HepG2 (cell line): ENCODE measurements at regions of chr7 and their contacts with region 1.

Region 1: GRCh38 chr7:132249614-132249972 is 326.7 kb downstream of the PLXNA4 start:
- DNase-seq: peak; percentile 64
- ATAC-seq: peak; percentile 73
- H3K4me3 ChIP-seq: no peak overlapping the region; a peak in 1 of 6 replicates
- H3K27ac ChIP-seq: no peak overlapping the region
- H3K4me1 ChIP-seq: peaks cover 44% of the 10 kb centered on the region
- H3K27me3 ChIP-seq: no peaks in the 10 kb centered on the region; a peak in 1 of 5 replicates
- CTCF ChIP-seq: peak; percentile 61
- EP300 ChIP-seq: no peak
- POLR2A ChIP-seq: no peak
- RAD21 ChIP-seq: no peak

Region 2: GRCh38 chr7:131688738-131689661 is 560.6 kb before region 1 on chr7:
- CTCF ChIA-PET with region 1: no interaction called
- POLR2A ChIA-PET with region 1: no interaction called
- in situ Hi-C with region 1: loop called (anchors 25 kb)
- intact Hi-C with region 1: no loop called
- DNase-seq: peak; percentile 49
- ATAC-seq: peak; percentile 84
- H3K4me3 ChIP-seq: no peak overlapping the region
- H3K27ac ChIP-seq: no peak overlapping the region
- H3K4me1 ChIP-seq: no peaks in the 10 kb centered on the region
- H3K27me3 ChIP-seq: peaks cover 2 to 38% of the 10 kb centered on the region in 2 experiments; a peak in 3 of 5 replicates
- CTCF ChIP-seq: peak; percentile 92
- EP300 ChIP-seq: no peak
- POLR2A ChIP-seq: no peak
- RAD21 ChIP-seq: peak; percentile 73

Region 3: GRCh38 chr7:131945313-131945911 is 304.2 kb before region 1 on chr7:
- CTCF ChIA-PET with region 1: interaction called, 13 read pairs
- POLR2A ChIA-PET with region 1: no interaction called
- in situ Hi-C with region 1: loop called (anchors 5 kb)
- intact Hi-C with region 1: loop called (anchors 1 kb)
- DNase-seq: peak; percentile 9
- ATAC-seq: peak; percentile 92
- H3K4me3 ChIP-seq: 0 out of 6 replicates have a peak overlapping the region, but pooled peaks of 1 of the 3 experiments have one; percentile 10
- H3K27ac ChIP-seq: no peak overlapping the region
- H3K4me1 ChIP-seq: peaks cover 31% of the 10 kb centered on the region
- H3K27me3 ChIP-seq: peaks cover 4 to 41% of the 10 kb centered on the region in 2 experiments; a peak in 4 of 5 replicates
- CTCF ChIP-seq: peak; percentile 91
- EP300 ChIP-seq: no peak
- POLR2A ChIP-seq: no peak
- RAD21 ChIP-seq: peak; percentile 93

Region 4: DNA sequence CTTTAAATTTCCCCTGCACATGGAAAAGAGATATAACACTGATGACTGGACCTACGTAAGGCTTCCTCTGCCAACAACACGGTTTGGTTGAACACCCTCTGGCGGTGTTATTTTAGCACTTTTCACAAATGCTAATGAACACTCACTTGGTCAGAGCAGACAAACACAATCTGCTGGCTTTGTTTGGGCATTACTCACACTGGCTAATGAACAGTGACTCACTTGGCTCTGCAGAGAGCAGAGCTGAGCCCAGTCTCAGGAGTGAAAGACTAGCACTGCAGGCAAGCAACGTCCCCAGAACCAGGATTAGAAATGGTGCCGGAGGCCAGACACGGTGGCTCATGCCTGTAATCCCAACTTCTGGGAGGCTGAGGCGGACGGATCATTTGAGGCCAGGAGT is 104.1 kb before region 1 on chr7:
- CTCF ChIA-PET with region 1: no interaction called
- POLR2A ChIA-PET with region 1: no interaction called
- in situ Hi-C with region 1: no loop called
- intact Hi-C with region 1: loop called (anchors 5 kb)
- DNase-seq: no peak
- ATAC-seq: no peak
- H3K4me3 ChIP-seq: no peak overlapping the region
- H3K27ac ChIP-seq: no peak overlapping the region
- H3K4me1 ChIP-seq: no peaks in the 10 kb centered on the region
- H3K27me3 ChIP-seq: peaks cover 2 to 45% of the 10 kb centered on the region in 2 experiments; a peak in 3 of 5 replicates
- CTCF ChIP-seq: no peak
- EP300 ChIP-seq: no peak
- POLR2A ChIP-seq: no peak
- RAD21 ChIP-seq: no peak

Region 5: GRCh38 chr7:132218876-132219275 is 30.7 kb before region 1 on chr7:
- CTCF ChIA-PET with region 1: no interaction called
- POLR2A ChIA-PET with region 1: interaction called, 4 read pairs
- in situ Hi-C with region 1: no loop called
- intact Hi-C with region 1: loop called (anchors 2 kb)
- DNase-seq: peak; percentile 89
- ATAC-seq: peak; percentile 65
- H3K4me3 ChIP-seq: no peak overlapping the region; a peak in 1 of 6 replicates
- H3K27ac ChIP-seq: peak overlapping the region; percentile 65
- H3K4me1 ChIP-seq: peaks cover 60% of the 10 kb centered on the region
- H3K27me3 ChIP-seq: 0 out of 5 replicates have a peak, but pooled peaks cover 0 to 1% of the 10 kb centered on the region in 2 experiments
- CTCF ChIP-seq: no peak
- EP300 ChIP-seq: peak in 1 of 2 experiments; percentile 94; a peak in 2 of 4 replicates
- POLR2A ChIP-seq: no peak
- RAD21 ChIP-seq: no peak

Region 6: GRCh38 chr7:132368246-132368900 is 118.8 kb after region 1 on chr7:
- CTCF ChIA-PET with region 1: no interaction called
- POLR2A ChIA-PET with region 1: no interaction called
- in situ Hi-C with region 1: no loop called
- intact Hi-C with region 1: no loop called
- DNase-seq: no peak
- ATAC-seq: no peak
- H3K4me3 ChIP-seq: no peak overlapping the region
- H3K27ac ChIP-seq: no peak overlapping the region
- H3K4me1 ChIP-seq: no peaks in the 10 kb centered on the region
- H3K27me3 ChIP-seq: peaks cover 0 to 9% of the 10 kb centered on the region in 2 experiments; a peak in 2 of 5 replicates
- CTCF ChIP-seq: no peak
- EP300 ChIP-seq: no peak
- POLR2A ChIP-seq: no peak
- RAD21 ChIP-seq: no peak